OCI-LY7 (cell line): ENCODE measurements at regions of chr7 and their contacts with region 1.

Region 1: DNA sequence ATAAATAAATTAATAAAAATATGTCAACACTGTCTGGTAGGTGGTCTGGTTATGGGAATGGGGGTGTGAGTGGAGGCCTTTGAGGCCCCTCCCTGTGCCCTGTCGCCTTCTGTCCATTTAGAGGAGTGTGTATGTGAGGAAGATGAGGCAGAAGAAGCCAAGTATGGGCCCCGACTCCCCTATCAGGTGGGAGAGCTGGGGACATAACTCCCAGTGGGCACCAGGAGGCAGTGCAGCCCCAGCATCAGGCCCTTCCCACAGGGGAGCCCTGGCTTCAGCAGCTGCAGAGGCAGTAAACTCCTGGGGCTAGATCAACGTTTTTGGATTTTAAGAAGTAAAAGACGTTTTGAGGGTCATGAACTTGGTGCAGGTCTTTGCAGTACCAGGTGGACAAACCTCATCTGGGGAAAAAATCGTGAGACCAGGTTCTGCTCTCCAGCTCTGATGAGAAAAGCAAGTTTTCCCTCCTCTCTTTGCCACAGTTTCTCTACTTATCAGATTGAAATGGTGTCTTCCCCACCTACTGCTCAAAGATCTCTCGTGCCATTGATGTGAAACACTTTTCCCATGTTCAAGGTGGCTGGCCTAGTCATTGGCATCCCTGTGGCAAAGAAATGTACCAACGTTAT is 167.8 kb upstream of the EEPD1 start:
- DNase-seq: peak; percentile 76
- H3K4me3 ChIP-seq: no peak overlapping the region
- H3K27ac ChIP-seq: no peak overlapping the region
- H3K4me1 ChIP-seq: no peaks in the 10 kb centered on the region
- CTCF ChIP-seq: peak; percentile 93

Region 2: GRCh38 chr7:35831208-35831607 is 154.0 kb before region 1 on chr7:
- CTCF ChIA-PET with region 1: no interaction called
- POLR2A ChIA-PET with region 1: no interaction called
- intact Hi-C with region 1: no loop called
- DNase-seq: no peak
- H3K4me3 ChIP-seq: no peak overlapping the region
- H3K27ac ChIP-seq: no peak overlapping the region
- H3K4me1 ChIP-seq: peaks cover 8% of the 10 kb centered on the region
- CTCF ChIP-seq: no peak

Region 3: DNA sequence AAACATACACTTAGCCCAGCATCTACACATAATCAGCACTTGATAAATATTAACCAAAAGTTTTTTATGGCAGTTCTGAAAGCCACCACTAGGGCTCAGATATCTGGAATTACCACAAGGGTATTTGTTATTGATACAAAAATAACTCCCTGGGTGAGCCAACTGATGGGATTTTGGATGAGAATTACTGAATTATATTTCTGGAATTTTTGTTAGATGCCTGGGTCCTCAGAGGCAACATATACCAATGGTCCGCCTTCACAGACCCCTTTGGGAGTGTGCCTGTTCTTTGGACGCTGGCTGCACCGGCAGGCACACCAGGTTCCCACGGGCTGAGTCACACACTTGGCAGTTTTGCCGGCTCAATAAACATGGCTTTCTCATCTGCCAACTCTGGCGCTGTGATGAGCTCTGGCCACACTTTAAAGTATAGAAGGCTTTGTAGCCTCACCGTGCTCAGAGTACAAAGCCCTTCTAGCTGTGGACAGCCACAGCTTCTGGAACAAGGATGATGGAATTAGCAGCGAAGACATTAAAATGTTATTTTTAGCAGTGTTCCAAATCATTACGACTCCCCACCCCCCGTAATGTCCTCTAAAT is 143.3 kb after region 1 on chr7:
- CTCF ChIA-PET with region 1: no interaction called
- POLR2A ChIA-PET with region 1: no interaction called
- intact Hi-C with region 1: loop called (anchors 10 kb)
- DNase-seq: peak; percentile 11
- H3K4me3 ChIP-seq: no peak overlapping the region
- H3K27ac ChIP-seq: no peak overlapping the region
- H3K4me1 ChIP-seq: no peaks in the 10 kb centered on the region
- CTCF ChIP-seq: peak; percentile 84

Region 4: GRCh38 chr7:36315309-36316133 is 330.3 kb after region 1 on chr7:
- CTCF ChIA-PET with region 1: no interaction called
- POLR2A ChIA-PET with region 1: no interaction called
- intact Hi-C with region 1: loop called (anchors 1 kb)
- DNase-seq: peak; percentile 13
- H3K4me3 ChIP-seq: no peak overlapping the region
- H3K27ac ChIP-seq: no peak overlapping the region
- H3K4me1 ChIP-seq: no peaks in the 10 kb centered on the region
- CTCF ChIP-seq: no peak